HepG2 (cell line): ENCODE measurements at regions of chr4 and their contacts with region 1.

Region 1: GRCh38 chr4:182880387-182881356 is 36.5 kb downstream of the DCTD start:
- DNase-seq: peak; percentile 89
- ATAC-seq: peak; percentile 90
- H3K4me3 ChIP-seq: peak overlapping the region; percentile 20 to 58 (median 24); a peak in 5 of 6 replicates
- H3K27ac ChIP-seq: peak overlapping the region; percentile 84
- H3K4me1 ChIP-seq: peaks cover 59% of the 10 kb centered on the region
- H3K27me3 ChIP-seq: no peaks in the 10 kb centered on the region
- CTCF ChIP-seq: no peak; the same call in 1 of the 2 replicates
- EP300 ChIP-seq: peak in 1 of 2 experiments; percentile 69; a peak in 2 of 4 replicates
- POLR2A ChIP-seq: peak; percentile 77 to 78
- RAD21 ChIP-seq: peak; percentile 57; the same call in 1 of the 2 replicates

Region 2: DNA sequence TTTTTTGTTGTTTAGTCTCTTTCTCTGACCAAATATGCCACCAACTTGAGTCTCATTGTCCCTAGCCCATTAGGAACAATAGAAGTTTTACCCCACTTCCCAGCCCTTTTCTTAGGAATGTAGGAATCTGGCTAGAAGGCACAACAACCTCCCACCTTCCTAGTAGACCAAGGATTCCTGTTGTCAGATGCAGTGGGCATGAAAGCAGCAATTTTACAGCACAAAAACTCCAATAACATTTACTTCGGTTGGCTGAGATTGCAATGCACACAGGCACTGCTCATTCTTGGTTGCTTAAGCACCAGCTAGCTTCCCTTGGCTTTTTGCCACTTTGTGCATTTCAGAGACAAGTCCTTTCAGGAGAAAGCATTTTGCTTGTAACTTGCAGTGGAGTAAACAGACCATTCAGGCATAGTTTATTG is 324.7 kb before region 1 on chr4:
- CTCF ChIA-PET with region 1: no interaction called
- POLR2A ChIA-PET with region 1: no interaction called
- in situ Hi-C with region 1: no loop called
- intact Hi-C with region 1: no loop called
- DNase-seq: no peak
- ATAC-seq: no peak
- H3K4me3 ChIP-seq: no peak overlapping the region
- H3K27ac ChIP-seq: no peak overlapping the region
- H3K4me1 ChIP-seq: no peaks in the 10 kb centered on the region
- H3K27me3 ChIP-seq: no peaks in the 10 kb centered on the region
- CTCF ChIP-seq: no peak
- EP300 ChIP-seq: no peak
- POLR2A ChIP-seq: no peak
- RAD21 ChIP-seq: no peak

Region 3: DNA sequence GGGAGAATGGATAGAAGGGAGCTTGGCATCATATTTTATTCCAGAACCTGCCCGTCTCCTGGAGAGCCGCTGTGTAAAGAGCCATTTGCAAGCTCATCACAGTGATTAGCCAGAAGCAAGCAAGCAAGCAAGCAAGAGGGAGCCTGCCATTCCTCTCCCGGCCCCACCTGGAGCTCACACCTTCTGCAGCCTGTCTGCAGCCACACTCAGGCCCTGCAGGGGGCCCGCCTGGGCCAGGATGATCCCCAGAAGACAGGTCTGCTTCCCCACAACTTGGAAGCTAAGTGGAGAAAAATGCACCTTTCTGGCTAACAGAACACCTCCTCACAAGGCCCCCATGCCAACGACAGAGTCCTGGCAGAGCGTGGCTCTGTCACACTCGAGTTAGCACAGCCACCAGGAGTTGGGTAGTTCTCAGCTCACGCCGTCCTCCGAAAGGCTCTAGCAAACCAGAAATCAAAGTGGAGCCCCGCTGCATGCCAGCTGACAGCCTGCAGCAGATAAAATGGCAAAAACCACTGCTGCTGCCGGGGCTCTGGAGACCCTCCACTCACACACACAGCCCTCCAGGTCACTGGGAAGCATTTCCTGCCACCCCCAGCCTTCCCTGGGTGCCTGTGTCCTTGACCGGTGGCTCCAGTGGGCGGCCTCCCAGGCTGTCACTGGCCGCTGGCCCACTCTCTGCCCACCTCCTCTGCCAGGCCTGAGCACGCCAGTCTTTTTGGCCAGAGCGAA is 18.4 kb before region 1 on chr4:
- CTCF ChIA-PET with region 1: no interaction called
- POLR2A ChIA-PET with region 1: no interaction called
- in situ Hi-C with region 1: no loop called
- intact Hi-C with region 1: loop called (anchors 2 kb)
- DNase-seq: peak; percentile 35
- ATAC-seq: peak; percentile 98
- H3K4me3 ChIP-seq: no peak overlapping the region; a peak in 1 of 6 replicates
- H3K27ac ChIP-seq: no peak overlapping the region
- H3K4me1 ChIP-seq: peaks cover 19% of the 10 kb centered on the region
- H3K27me3 ChIP-seq: no peaks in the 10 kb centered on the region
- CTCF ChIP-seq: peak; percentile 68
- EP300 ChIP-seq: no peak
- POLR2A ChIP-seq: no peak
- RAD21 ChIP-seq: peak; percentile 63

Region 4: GRCh38 chr4:182931691-182932345 is 51.1 kb after region 1 on chr4:
- CTCF ChIA-PET with region 1: no interaction called
- POLR2A ChIA-PET with region 1: no interaction called
- in situ Hi-C with region 1: no loop called
- intact Hi-C with region 1: no loop called
- DNase-seq: no peak
- ATAC-seq: no peak
- H3K4me3 ChIP-seq: no peak overlapping the region
- H3K27ac ChIP-seq: no peak overlapping the region
- H3K4me1 ChIP-seq: no peaks in the 10 kb centered on the region; the same call in 1 of the 2 replicates
- H3K27me3 ChIP-seq: no peaks in the 10 kb centered on the region
- CTCF ChIP-seq: no peak
- EP300 ChIP-seq: no peak
- POLR2A ChIP-seq: no peak
- RAD21 ChIP-seq: no peak